GM12878 (cell line): ENCODE measurements at regions of chr22 and their contacts with region 1.

Region 1: DNA sequence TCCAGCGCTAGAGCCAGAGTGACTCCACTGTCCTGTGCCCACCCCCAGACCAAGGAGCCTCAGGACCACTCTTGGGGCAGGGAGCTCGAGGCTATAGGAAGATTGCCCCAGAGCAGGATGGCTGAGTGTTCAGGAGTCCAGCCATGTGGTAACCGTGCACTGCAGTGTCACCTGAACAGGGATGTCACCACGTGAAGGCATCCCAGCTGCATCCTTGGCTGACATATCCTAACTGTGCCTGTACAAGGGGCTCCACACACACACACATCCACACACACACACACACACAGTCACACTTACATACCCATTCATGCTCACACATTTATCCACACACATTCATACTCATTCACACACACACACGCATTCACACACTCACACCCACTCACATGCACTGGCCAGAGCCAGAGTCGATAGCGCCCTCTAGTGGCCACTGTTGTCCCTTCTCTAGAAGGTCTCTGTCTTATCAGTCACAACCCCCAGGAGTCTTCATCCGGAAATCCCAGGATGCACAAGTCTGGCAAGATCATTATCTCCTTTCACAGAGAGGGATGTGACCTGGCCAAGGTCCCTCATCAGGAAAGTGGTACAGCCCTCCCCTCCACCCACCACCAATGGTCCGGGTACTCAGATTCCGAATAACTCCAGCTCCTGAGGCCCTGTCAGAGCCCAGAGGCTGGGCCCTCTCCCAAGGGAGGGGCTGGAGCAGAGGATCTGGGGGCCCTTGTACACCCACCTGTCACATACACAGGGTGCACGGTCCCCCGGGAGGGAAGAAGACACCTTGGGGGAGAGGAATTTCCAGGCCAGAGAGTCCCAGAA is 55.1 kb downstream of the IGLL5 start:
- DNase-seq: peak; percentile 78
- ATAC-seq: peak; percentile 89
- H3K4me3 ChIP-seq: no peak overlapping the region
- H3K27ac ChIP-seq: peak overlapping the region; percentile 92
- H3K4me1 ChIP-seq: peaks cover 90% of the 10 kb centered on the region
- H3K27me3 ChIP-seq: no peaks in the 10 kb centered on the region
- CTCF ChIP-seq: peak; percentile 84 to 96 (median 87)
- EP300 ChIP-seq: 0 out of 4 replicates have a peak, but pooled peaks of 1 of the 2 experiments have one; percentile 61
- POLR2A ChIP-seq: no peak; the same call in 1 of the 2 replicates
- RAD21 ChIP-seq: peak; percentile 94

Region 2: DNA sequence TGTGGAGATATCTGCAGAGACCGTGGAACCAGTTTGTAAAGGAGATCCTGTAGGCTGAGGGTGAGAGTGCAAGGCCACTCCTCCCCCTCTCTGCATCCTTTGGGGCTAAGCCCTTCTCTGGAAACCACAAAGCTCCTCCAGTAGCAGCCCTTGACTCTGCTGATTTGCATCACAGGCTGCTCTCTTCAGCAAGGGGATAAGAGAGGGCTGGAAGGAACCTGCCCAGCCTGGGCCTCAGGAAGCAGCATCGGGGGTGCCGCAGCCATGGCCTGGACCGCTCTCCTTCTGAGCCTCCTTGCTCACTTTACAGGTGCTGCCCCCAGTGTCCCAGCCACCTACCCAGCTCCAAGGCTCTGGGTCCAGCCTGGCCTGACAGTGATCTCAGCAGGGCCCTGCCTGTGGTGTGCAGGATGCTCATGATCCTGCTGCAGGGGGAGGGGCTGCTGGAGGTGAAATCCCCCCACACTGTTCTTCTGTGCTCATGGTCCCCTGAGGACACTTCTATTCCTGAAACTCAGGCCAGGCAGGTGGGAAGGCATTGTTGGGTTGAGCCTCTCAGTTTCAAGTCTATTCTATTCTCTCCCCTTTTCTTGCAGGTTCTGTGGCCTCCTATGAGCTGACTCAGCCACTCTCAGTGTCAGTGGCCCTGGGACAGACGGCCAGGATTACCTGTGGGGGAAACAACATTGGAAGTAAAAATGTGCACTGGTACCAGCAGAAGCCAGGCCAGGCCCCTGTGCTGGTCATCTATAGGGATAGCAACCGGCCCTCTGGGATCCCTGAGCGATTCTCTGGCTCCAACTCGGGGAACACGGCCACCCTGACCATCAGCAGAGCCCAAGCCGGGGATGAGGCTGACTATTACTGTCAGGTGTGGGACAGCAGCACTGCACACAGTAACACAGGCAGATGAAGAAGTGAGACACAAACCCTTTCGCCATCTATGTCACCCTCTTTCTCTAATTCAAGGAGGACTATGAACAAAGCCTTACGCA is 123.6 kb before region 1 on chr22:
- CTCF ChIA-PET with region 1: interaction called, 10 read pairs
- POLR2A ChIA-PET with region 1: no interaction called
- RAD21 ChIA-PET with region 1: interaction called, 3 read pairs
- SMC1A ChIA-PET with region 1: interaction called, 4 read pairs
- in situ Hi-C with region 1: no loop called
- intact Hi-C with region 1: no loop called
- DNase-seq: peak; percentile 47
- ATAC-seq: peak; percentile 89
- H3K4me3 ChIP-seq: no peak overlapping the region
- H3K27ac ChIP-seq: peak overlapping the region; percentile 55
- H3K4me1 ChIP-seq: peaks cover 28% of the 10 kb centered on the region
- H3K27me3 ChIP-seq: no peaks in the 10 kb centered on the region
- CTCF ChIP-seq: no peak
- EP300 ChIP-seq: no peak
- POLR2A ChIP-seq: no peak
- RAD21 ChIP-seq: no peak

Region 3: GRCh38 chr22:22928666-22929380 is 13.9 kb before region 1 on chr22:
- CTCF ChIA-PET with region 1: interaction called, 57 read pairs
- POLR2A ChIA-PET with region 1: interaction called, 36 read pairs
- RAD21 ChIA-PET with region 1: interaction called, 34 read pairs
- SMC1A ChIA-PET with region 1: interaction called, 23 read pairs
- in situ Hi-C with region 1: no loop called
- intact Hi-C with region 1: no loop called
- DNase-seq: peak; percentile 99
- ATAC-seq: peak; percentile 87
- H3K4me3 ChIP-seq: peak overlapping the region; percentile 14; the same call in 1 of the 2 replicates
- H3K27ac ChIP-seq: peak overlapping the region; percentile 99
- H3K4me1 ChIP-seq: peaks cover 81% of the 10 kb centered on the region
- H3K27me3 ChIP-seq: no peaks in the 10 kb centered on the region
- CTCF ChIP-seq: no peak
- EP300 ChIP-seq: peak; percentile 86 to 89; a peak in 3 of 4 replicates
- POLR2A ChIP-seq: peak; percentile 88
- RAD21 ChIP-seq: peak; percentile 27; the same call in 1 of the 2 replicates

Region 4: GRCh38 chr22:23047265-23047664 is 104.5 kb after region 1 on chr22:
- CTCF ChIA-PET with region 1: no interaction called
- POLR2A ChIA-PET with region 1: no interaction called
- RAD21 ChIA-PET with region 1: no interaction called
- SMC1A ChIA-PET with region 1: no interaction called
- in situ Hi-C with region 1: no loop called
- intact Hi-C with region 1: no loop called
- DNase-seq: no peak
- ATAC-seq: no peak
- H3K4me3 ChIP-seq: no peak overlapping the region
- H3K27ac ChIP-seq: no peak overlapping the region
- H3K4me1 ChIP-seq: no peaks in the 10 kb centered on the region
- H3K27me3 ChIP-seq: no peaks in the 10 kb centered on the region
- CTCF ChIP-seq: no peak
- EP300 ChIP-seq: no peak
- POLR2A ChIP-seq: no peak
- RAD21 ChIP-seq: no peak